ENCODE measurements at regions of chr2 and their contacts with region 1.

Region 1: GRCh38 chr2:134411828-134412638 is 158.2 kb downstream of the MGAT5 start:
- DNase-seq: peak; percentile 26 to 80 (median 56)
- H3K4me3 ChIP-seq: no peak overlapping the region
- H3K4me3 Mint-ChIP-seq: peak overlapping the region in 3 of 7 donors; percentile 9 to 51 (median 22)
- H3K27ac ChIP-seq: no peak overlapping the region
- H3K27ac Mint-ChIP-seq: peak overlapping the region in 3 of 8 donors; percentile 25 to 66 (median 62)
- H3K4me1 ChIP-seq: peaks cover 25% of the 10 kb centered on the region
- H3K4me1 Mint-ChIP-seq: peaks cover 48 to 54% (median 54%) of the 10 kb centered on the region in 3 donors
- H3K27me3 ChIP-seq: no peaks in the 10 kb centered on the region
- H3K27me3 Mint-ChIP-seq: no peaks in the 10 kb centered on the region

Region 2: GRCh38 chr2:133886735-133887660 is 525.0 kb before region 1 on chr2:
- CTCF ChIA-PET with region 1: interaction called, 35 read pairs
- POLR2A ChIA-PET with region 1: no interaction called
- DNase-seq: peak; percentile 11 to 60 (median 19)
- H3K4me3 ChIP-seq: no peak overlapping the region
- H3K4me3 Mint-ChIP-seq: no peak overlapping the region
- H3K27ac ChIP-seq: no peak overlapping the region
- H3K27ac Mint-ChIP-seq: no peak overlapping the region
- H3K4me1 ChIP-seq: no peaks in the 10 kb centered on the region
- H3K4me1 Mint-ChIP-seq: peaks cover 0 to 6% (median 0%) of the 10 kb centered on the region in 3 donors
- H3K27me3 ChIP-seq: no peaks in the 10 kb centered on the region
- H3K27me3 Mint-ChIP-seq: peaks cover 14 to 30% of the 10 kb centered on the region in 2 donors

Region 3: DNA sequence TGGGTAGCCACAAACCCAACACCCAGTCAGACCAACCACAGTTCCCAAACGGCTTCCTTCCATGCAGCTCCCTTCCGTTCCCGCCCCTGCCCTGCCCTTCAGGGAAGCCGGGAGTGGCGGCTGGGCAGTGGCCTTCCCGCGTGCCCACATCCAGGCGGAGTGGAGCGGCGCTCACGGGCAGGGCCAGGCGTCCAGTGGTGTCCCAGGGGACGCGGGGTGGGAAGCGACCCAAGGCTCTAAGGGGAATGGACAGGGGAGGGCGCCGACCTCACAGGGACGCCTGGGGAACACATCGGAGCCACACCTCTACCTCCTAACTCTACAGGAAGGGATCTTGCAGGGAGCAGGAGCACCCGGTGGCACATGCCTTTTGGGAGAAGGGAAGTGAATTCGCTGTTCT is 384.1 kb before region 1 on chr2:
- CTCF ChIA-PET with region 1: no interaction called
- POLR2A ChIA-PET with region 1: no interaction called
- DNase-seq: no peak
- H3K4me3 ChIP-seq: no peak overlapping the region
- H3K4me3 Mint-ChIP-seq: no peak overlapping the region
- H3K27ac ChIP-seq: no peak overlapping the region
- H3K27ac Mint-ChIP-seq: no peak overlapping the region
- H3K4me1 ChIP-seq: no peaks in the 10 kb centered on the region
- H3K4me1 Mint-ChIP-seq: peaks cover 0 to 4% (median 3%) of the 10 kb centered on the region in 3 donors
- H3K27me3 ChIP-seq: no peaks in the 10 kb centered on the region
- H3K27me3 Mint-ChIP-seq: peaks cover 18 to 49% of the 10 kb centered on the region in 2 donors

Region 4: GRCh38 chr2:134218930-134219658 is 192.9 kb before region 1 on chr2:
- CTCF ChIA-PET with region 1: interaction called, 11 read pairs
- POLR2A ChIA-PET with region 1: no interaction called
- DNase-seq: peak; percentile 6 to 63 (median 37)
- H3K4me3 ChIP-seq: peak overlapping the region; percentile 29
- H3K4me3 Mint-ChIP-seq: peak overlapping the region in 6 of 7 donors; percentile 67 to 82 (median 76)
- H3K27ac ChIP-seq: no peak overlapping the region
- H3K27ac Mint-ChIP-seq: peak overlapping the region; percentile 72 to 96 (median 92)
- H3K4me1 ChIP-seq: peaks cover 43% of the 10 kb centered on the region
- H3K4me1 Mint-ChIP-seq: peaks cover 60 to 88% (median 71%) of the 10 kb centered on the region in 3 donors
- H3K27me3 ChIP-seq: no peaks in the 10 kb centered on the region
- H3K27me3 Mint-ChIP-seq: peaks cover 0 to 2% of the 10 kb centered on the region in 2 donors

Region 5: DNA sequence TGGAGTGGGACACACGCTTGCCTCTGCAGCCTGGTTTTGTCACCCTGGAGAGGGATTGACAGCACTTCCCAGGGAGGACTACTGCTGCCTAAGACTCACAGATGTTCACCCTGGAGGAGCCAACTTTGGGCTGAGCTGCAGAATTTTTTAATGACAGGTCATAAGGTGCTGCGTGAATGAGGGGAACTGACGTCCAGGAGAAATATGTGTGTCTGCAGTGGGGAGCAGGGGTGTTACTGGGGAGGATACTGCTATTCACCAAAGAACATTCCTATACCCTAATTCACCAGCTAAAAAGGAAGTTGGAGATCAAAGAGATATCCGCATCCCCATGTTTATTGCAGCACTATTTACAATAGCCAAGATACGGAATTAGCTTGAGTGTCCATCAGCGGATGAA is 13.7 kb before region 1 on chr2:
- CTCF ChIA-PET with region 1: interaction called, 10 read pairs
- POLR2A ChIA-PET with region 1: no interaction called
- DNase-seq: no peak
- H3K4me3 ChIP-seq: no peak overlapping the region
- H3K4me3 Mint-ChIP-seq: no peak overlapping the region
- H3K27ac ChIP-seq: no peak overlapping the region
- H3K27ac Mint-ChIP-seq: peak overlapping the region in 2 of 8 donors; percentile 9 to 49
- H3K4me1 ChIP-seq: no peaks in the 10 kb centered on the region
- H3K4me1 Mint-ChIP-seq: peaks cover 0 to 35% (median 4%) of the 10 kb centered on the region in 3 donors
- H3K27me3 ChIP-seq: no peaks in the 10 kb centered on the region
- H3K27me3 Mint-ChIP-seq: no peaks in the 10 kb centered on the region

Region 6: GRCh38 chr2:134500211-134500935 is 88.3 kb after region 1 on chr2:
- CTCF ChIA-PET with region 1: no interaction called
- POLR2A ChIA-PET with region 1: no interaction called
- DNase-seq: no peak
- H3K4me3 ChIP-seq: no peak overlapping the region
- H3K4me3 Mint-ChIP-seq: no peak overlapping the region
- H3K27ac ChIP-seq: no peak overlapping the region
- H3K27ac Mint-ChIP-seq: no peak overlapping the region
- H3K4me1 ChIP-seq: no peaks in the 10 kb centered on the region
- H3K4me1 Mint-ChIP-seq: no peaks in the 10 kb centered on the region
- H3K27me3 ChIP-seq: no peaks in the 10 kb centered on the region
- H3K27me3 Mint-ChIP-seq: peaks cover 5 to 7% of the 10 kb centered on the region in 2 donors

Region 7: GRCh38 chr2:134657637-134658250 is 245.7 kb after region 1 on chr2:
- CTCF ChIA-PET with region 1: no interaction called
- POLR2A ChIA-PET with region 1: no interaction called
- DNase-seq: peak in 3 of 5 donors; percentile 21 to 53 (median 26)
- H3K4me3 ChIP-seq: no peak overlapping the region
- H3K4me3 Mint-ChIP-seq: no peak overlapping the region
- H3K27ac ChIP-seq: no peak overlapping the region
- H3K27ac Mint-ChIP-seq: no peak overlapping the region
- H3K4me1 ChIP-seq: peaks cover 4% of the 10 kb centered on the region
- H3K4me1 Mint-ChIP-seq: peaks cover 23 to 38% (median 24%) of the 10 kb centered on the region in 3 donors
- H3K27me3 ChIP-seq: no peaks in the 10 kb centered on the region
- H3K27me3 Mint-ChIP-seq: peaks cover 3 to 6% of the 10 kb centered on the region in 2 donors

Measured in CD8-positive, alpha-beta memory T cell (primary cell).